Posterior vena cava (tissue), 2 donors: ENCODE measurements at regions of chr2 and their contacts with region 1.

Region 1: DNA sequence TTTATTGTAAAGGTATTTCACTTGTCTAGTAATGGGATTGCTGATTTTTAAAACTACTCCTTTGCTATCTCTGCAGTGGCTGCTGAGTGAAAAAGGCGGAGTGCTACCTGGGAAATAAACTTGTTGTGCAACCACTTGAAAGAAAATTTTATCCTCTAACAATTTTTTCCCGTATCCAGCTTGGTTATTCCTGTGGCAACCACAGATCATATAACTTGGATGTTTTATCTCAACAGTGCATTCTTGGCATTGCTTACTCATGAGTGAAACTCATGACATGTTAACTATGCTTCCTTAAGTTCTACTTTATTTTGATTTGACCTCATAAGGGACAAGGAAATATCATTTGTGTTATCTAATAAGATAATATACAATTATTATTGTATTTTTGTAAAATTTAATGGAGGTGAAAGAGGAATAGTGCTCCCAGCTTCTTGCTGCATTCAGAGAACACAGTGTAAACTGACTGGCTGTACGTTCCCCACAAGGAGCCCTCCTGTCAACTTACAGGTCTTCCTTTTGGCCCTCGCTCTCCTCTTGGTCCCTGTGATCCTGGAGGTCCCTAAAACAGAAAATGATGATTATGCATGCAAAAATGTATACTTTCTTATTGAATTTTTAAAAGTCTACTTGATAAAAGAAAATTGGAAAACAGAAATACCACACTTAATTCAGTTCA is 82.7 kb downstream of the COL5A2 start:
- DNase-seq: no peak

Region 2: DNA sequence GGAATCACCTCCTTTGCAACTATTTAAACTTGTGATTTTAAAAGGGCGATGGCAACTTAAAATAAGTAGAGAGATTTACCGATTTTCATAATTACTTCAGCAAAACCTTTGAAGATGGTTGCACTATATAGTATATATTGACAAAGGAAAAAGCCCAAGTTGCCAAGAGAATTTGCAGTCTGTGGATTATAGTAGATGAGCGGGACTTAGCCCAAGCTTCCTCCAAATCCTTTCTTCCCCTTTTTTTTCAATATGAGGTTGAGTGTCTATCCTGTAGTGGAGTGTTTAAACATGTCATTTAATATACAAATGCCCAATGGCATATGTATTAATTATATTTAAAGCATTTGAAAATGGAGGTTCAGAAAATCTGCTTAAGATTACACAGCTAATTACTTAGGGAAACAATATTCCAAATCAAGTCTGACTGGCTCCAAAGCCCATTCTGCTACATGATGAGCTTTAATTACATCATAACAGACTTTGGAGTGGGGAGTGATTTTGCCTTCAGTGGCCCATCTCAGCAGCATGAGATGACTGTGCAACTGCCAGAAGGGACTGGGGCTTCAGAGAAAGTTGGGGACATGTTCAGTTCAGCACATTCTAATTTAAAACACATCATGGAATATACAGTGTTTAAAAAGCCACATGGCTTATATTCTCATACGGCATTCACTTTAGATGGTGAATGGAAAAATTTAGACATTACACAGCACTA is 49.6 kb before region 1 on chr2:
- intact Hi-C with region 1: no loop called
- DNase-seq: no peak

Region 3: GRCh38 chr2:189412330-189412953 is 315.5 kb after region 1 on chr2:
- intact Hi-C with region 1: loop called in 1 of 2 experiments (anchors 5 kb)
- DNase-seq: no peak

Region 4: DNA sequence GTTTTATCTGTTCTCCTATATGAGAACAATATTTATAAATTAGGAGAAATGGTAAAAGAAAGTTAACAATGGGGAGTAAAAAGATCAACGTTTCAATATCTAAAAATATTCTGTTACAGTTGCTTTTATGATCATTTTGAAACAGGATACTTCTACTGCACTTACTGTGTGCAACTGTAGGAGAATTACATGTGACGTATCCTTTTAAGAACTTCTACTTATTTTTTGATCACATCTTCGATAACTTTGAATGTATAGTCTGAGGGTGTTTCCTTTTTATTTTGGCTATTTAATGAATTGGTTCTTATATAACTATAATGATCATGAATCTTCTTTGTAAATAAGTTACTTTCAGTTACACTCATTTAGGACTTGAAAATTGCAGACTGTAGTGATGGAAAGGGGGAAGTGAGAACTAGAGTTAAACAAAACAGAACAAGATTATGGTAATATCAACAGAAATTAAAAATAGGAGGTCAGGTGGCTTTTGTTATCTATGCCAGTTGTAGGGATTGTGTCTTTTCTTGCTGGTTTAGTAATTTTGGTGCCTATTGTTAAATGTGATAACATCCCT is 855.7 kb after region 1 on chr2:
- intact Hi-C with region 1: no loop called
- DNase-seq: no peak